ENCODE measurements at regions of chr5 and their contacts with region 1.

Region 1: DNA sequence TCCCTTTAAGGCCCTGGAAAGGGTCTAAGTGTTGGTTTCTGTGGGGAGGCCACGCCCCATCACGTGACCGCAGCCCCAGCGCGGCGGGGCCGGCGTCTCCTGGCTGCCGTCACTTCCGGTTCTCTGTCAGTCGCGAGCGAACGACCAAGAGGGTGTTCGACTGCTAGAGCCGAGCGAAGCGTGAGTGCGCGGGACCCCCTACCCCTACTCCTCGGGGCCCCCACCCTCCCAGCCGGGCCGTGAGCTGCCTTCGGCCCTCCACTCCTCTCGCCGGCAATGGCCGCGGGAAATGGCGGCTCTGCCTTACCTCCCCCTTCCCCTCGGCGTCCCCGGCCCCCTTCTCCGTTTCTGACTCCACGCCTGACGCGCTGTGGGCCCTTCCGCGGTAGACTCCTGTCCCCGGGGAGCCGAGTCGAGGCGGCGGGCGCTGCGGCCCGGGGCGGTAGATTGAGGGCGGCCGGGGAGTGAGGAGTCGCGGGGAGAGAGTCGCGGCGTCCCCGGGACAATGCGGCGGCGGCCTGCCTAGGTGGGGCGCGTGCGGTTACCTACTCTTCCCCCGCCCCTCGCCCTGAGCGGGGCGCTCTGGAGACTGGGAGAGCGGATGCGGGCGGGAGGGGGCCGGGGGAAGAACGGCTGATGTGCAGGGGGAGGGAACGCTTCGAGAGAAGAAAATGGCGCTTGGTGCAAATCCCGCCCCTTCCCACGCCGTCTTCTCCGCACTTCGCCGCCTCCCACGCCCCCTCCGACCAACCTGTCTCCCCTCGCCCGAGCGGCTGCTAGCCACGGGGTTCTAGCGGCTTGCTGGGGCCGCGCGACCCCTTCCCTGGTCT is at the start of gene SUB1:
- DNase-seq: peak; percentile 90
- ATAC-seq: peak; percentile 86
- H3K4me3 ChIP-seq: peak within 1 kb of the TSS; percentile 89
- H3K27ac ChIP-seq: peak within 1 kb of the TSS; percentile 91
- H3K4me1 ChIP-seq: peaks cover 4% of the 10 kb centered on the region
- H3K27me3 ChIP-seq: no peaks in the 10 kb centered on the region
- CTCF ChIP-seq: 0 out of 2 replicates have a peak, but pooled peaks have one; percentile 18
- POLR2A ChIP-seq: peak; percentile 92
- RAD21 ChIP-seq: no peak; the same call in 1 of the 2 replicates
- total RNA-seq, gene SUB1: 19.5 and 90.5 TPM in 2 replicates

Region 2: DNA sequence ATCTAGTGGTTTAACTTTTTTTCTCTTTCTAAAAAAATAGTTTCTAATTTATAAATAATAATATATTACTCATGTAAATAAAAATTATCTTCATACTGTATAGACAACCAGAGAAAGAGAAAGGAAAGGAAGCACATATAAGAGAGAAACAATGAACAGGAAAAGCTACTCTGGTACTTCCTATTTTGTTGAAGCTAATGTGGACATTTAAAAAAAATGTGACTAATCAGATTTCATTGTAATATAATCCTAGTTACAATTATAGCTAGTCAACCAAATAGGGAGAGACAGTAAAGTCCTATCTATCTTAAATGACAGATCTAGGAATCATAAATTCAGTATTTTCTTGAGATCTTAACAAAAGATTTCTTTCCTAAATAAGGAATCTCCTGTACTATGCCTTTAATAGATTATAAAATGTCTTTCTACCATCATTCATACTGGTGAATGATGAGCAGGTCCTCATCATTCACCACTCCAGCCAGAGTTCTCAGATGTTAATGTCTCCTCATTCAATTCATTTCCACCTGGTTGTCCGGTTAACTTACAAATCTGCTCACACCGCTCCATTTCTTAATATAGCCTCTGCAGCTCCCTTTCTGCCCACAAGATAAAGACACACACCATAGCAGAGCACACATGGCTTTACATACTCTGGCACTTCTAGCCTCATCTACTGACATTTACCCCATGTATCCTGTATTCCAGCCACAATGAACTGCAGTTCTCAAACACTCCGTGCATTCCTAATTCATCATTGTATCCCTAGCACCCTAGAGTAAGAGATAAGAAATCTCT is 172.0 kb before region 1 on chr5:
- CTCF ChIA-PET with region 1: no interaction called
- POLR2A ChIA-PET with region 1: no interaction called
- dilution Hi-C with region 1: no loop called
- in situ Hi-C with region 1: no loop called
- intact Hi-C with region 1: loop called (anchors 5 kb)
- DNase-seq: no peak
- ATAC-seq: no peak
- H3K4me3 ChIP-seq: no peak overlapping the region
- H3K27ac ChIP-seq: no peak overlapping the region
- H3K4me1 ChIP-seq: no peaks in the 10 kb centered on the region
- H3K27me3 ChIP-seq: no peaks in the 10 kb centered on the region
- CTCF ChIP-seq: no peak
- POLR2A ChIP-seq: no peak
- RAD21 ChIP-seq: no peak

Region 3: GRCh38 chr5:32489791-32490582 is 95.7 kb before region 1 on chr5:
- CTCF ChIA-PET with region 1: interaction called, 81 read pairs
- POLR2A ChIA-PET with region 1: interaction called, 5 read pairs
- dilution Hi-C with region 1: no loop called
- in situ Hi-C with region 1: loop called (anchors 5 kb)
- intact Hi-C with region 1: loop called (anchors 1 kb)
- DNase-seq: peak; percentile 87
- ATAC-seq: peak; percentile 86
- H3K4me3 ChIP-seq: no peak overlapping the region
- H3K27ac ChIP-seq: peak overlapping the region; percentile 53; the same call in 1 of the 2 replicates
- H3K4me1 ChIP-seq: no peaks in the 10 kb centered on the region
- H3K27me3 ChIP-seq: no peaks in the 10 kb centered on the region
- CTCF ChIP-seq: peak; percentile 78
- POLR2A ChIP-seq: no peak
- RAD21 ChIP-seq: peak; percentile 81

Region 4: DNA sequence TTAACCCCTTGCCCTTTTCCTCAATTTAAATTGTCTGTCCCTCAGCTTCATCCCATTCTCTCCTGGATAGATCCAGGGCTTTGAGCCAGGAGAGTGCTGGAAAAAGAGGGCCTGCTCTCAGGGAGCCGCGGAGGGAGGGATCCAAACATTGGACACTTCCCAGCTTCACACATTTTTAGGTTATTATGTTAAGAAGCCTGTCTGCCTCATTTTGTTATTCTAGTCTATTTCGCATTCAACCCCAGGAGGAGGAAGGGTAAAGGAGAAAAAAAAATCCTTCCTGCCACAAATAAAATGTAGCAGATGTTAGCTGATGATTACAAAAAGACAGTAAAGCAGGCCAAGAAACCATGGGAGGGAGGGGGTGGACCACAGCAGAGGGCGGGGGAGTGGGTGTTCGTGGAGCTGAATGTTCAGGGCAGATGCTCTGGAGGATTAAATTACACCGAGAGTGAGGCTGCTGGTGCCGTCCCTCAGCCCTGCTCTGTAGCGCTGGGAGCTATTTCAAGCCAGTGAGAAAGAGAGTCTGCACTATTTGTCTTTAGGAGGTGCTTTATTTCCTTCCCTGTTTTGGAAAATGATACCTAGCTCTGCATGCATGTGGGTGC is 80.6 kb before region 1 on chr5:
- CTCF ChIA-PET with region 1: interaction called, 11 read pairs
- POLR2A ChIA-PET with region 1: no interaction called
- dilution Hi-C with region 1: no loop called
- in situ Hi-C with region 1: loop called (anchors 5 kb)
- intact Hi-C with region 1: loop called (anchors 5 kb)
- DNase-seq: peak; percentile 94
- ATAC-seq: peak; percentile 87
- H3K4me3 ChIP-seq: no peak overlapping the region
- H3K27ac ChIP-seq: peak overlapping the region; percentile 80; the same call in 1 of the 2 replicates
- H3K4me1 ChIP-seq: peaks cover 30% of the 10 kb centered on the region
- H3K27me3 ChIP-seq: 0 out of 2 replicates have a peak, but pooled peaks cover 4% of the 10 kb centered on the region
- CTCF ChIP-seq: no peak
- POLR2A ChIP-seq: no peak
- RAD21 ChIP-seq: no peak

Measured in IMR-90 (cell line).